Activated naive CD4-positive, alpha-beta T cell treated with anti-CD3 and anti-CD28 coated beads for 36 hours (primary cell): ENCODE measurements at regions of chrX and their contacts with region 1.

Region 1: DNA sequence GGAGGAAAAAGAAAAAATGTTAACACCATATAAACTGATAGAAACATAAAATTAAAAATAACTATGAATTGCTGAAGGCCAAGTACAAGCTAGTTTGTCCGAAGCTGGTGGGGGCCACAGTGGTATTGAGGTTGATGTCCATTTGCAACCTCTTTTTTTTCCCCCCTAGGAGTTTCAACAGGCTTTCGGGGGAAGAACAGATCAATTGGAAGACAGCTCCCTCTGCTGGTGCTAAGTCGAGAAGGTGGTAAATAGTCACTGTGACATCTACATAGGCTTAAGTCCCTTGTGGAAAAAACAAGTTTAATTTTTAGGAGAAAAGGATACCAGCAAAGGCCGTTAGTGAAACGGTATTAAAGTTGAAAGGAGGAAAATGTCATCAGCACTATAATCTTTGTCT is 115.7 kb upstream of the ZXDA start:
- DNase-seq: peak; percentile 47
- H3K4me3 Mint-ChIP-seq: no peak overlapping the region
- H3K27ac Mint-ChIP-seq: no peak overlapping the region
- H3K4me1 Mint-ChIP-seq: peaks cover 20% of the 10 kb centered on the region
- H3K27me3 Mint-ChIP-seq: no peaks in the 10 kb centered on the region

Region 2: GRCh38 chrX:57573754-57574153 is 452.2 kb before region 1 on chrX:
- CTCF ChIA-PET with region 1: no interaction called
- intact Hi-C with region 1: loop called (anchors 5 kb)
- DNase-seq: peak; percentile 39
- H3K4me3 Mint-ChIP-seq: no peak overlapping the region
- H3K27ac Mint-ChIP-seq: no peak overlapping the region
- H3K4me1 Mint-ChIP-seq: no peaks in the 10 kb centered on the region
- H3K27me3 Mint-ChIP-seq: no peaks in the 10 kb centered on the region

Region 3: DNA sequence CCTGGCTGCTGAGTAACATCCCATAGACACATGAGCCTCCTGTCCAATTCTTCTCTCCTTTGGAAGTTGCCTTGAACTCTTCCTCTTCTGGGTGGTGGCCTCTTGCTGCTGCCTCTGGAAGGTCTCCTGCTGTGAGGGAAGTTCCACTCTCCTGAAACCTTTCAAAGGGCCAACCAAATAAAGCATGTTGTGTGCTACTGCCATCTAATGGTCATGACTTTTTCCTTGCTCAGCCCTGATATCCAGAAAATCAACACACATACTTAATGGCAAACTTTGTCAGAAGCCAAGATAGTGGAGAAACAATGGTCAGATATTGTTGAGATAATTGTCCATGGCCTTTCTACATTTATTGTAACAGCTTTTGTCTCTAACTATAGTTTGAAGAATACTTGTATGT is 96.6 kb before region 1 on chrX:
- CTCF ChIA-PET with region 1: no interaction called
- intact Hi-C with region 1: loop called (anchors 5 kb)
- DNase-seq: no peak
- H3K4me3 Mint-ChIP-seq: no peak overlapping the region
- H3K27ac Mint-ChIP-seq: no peak overlapping the region
- H3K4me1 Mint-ChIP-seq: no peaks in the 10 kb centered on the region
- H3K27me3 Mint-ChIP-seq: no peaks in the 10 kb centered on the region